ENCODE measurements at regions of chr14 and their contacts with region 1.

Region 1: GRCh38 chr14:96275177-96276112 is 19.4 kb downstream of the BDKRB1 start:
- DNase-seq: peak; percentile 77
- H3K4me3 Mint-ChIP-seq: no peak overlapping the region
- H3K27ac Mint-ChIP-seq: no peak overlapping the region
- H3K4me1 Mint-ChIP-seq: no peaks in the 10 kb centered on the region
- H3K27me3 Mint-ChIP-seq: peaks cover 25% of the 10 kb centered on the region

Region 2: GRCh38 chr14:96100161-96101029 is 175.1 kb before region 1 on chr14:
- CTCF ChIA-PET with region 1: interaction called, 98 read pairs
- DNase-seq: peak; percentile 71
- H3K4me3 Mint-ChIP-seq: no peak overlapping the region
- H3K27ac Mint-ChIP-seq: no peak overlapping the region
- H3K4me1 Mint-ChIP-seq: no peaks in the 10 kb centered on the region
- H3K27me3 Mint-ChIP-seq: peaks cover 5% of the 10 kb centered on the region

Region 3: GRCh38 chr14:96260341-96260821 is 15.1 kb before region 1 on chr14:
- CTCF ChIA-PET with region 1: interaction called, 14 read pairs
- DNase-seq: no peak
- H3K4me3 Mint-ChIP-seq: no peak overlapping the region
- H3K27ac Mint-ChIP-seq: no peak overlapping the region
- H3K4me1 Mint-ChIP-seq: no peaks in the 10 kb centered on the region
- H3K27me3 Mint-ChIP-seq: peaks cover 21% of the 10 kb centered on the region

Region 4: DNA sequence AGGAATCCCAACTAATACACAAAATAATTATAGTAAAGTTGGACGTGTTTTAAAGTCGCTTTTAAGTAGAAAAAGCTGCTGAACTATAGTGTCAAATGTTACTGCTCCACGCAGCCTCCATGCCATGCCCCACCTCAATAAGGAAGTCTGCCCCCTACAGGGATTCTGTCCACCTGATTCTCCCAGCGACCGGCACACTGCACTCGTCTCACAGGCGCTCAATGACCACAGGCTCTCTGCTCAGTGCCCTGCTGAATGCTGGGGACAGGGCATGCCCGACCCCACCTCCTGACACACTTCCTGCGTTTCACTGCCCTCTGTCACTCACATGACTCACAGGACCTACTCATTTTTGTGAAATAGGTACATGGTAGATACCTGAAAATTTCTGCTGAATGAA is 29.5 kb after region 1 on chr14:
- CTCF ChIA-PET with region 1: no interaction called
- DNase-seq: no peak
- H3K4me3 Mint-ChIP-seq: no peak overlapping the region
- H3K27ac Mint-ChIP-seq: no peak overlapping the region
- H3K4me1 Mint-ChIP-seq: no peaks in the 10 kb centered on the region
- H3K27me3 Mint-ChIP-seq: no peaks in the 10 kb centered on the region

Region 5: DNA sequence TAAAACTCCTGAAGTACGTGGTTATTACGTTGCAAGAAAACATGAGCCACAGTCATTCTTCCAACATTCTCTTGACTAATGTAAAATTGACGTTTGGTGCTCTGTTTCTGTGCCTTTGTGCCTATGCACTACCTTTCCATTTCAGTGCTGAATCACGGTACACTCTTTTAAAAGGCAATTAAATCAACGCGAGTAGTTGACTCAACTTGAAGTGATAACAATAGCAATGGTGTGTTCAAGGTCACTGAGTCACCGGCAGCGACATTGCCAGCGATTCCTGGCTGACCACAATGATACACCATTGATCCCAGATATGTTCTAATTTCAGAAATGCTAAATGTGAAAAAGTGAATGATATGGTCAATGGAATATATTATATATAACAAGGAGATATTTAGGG is 134.3 kb after region 1 on chr14:
- CTCF ChIA-PET with region 1: no interaction called
- DNase-seq: no peak
- H3K4me3 Mint-ChIP-seq: no peak overlapping the region
- H3K27ac Mint-ChIP-seq: no peak overlapping the region
- H3K4me1 Mint-ChIP-seq: no peaks in the 10 kb centered on the region
- H3K27me3 Mint-ChIP-seq: peaks cover 4% of the 10 kb centered on the region